Dendritic cell treated with granulocyte-macrophage colony-stimulating factor and Interleukin-4, amounts not matched to agents 40 ng/mL and 50 ng/mL, for 4 days (primary cell): ENCODE measurements at regions of chr14 and their contacts with region 1.

Region 1: GRCh38 chr14:48876806-48877340 is 709.3 kb downstream of the RPS29 start:
- H3K4me3 Mint-ChIP-seq: no peak overlapping the region
- H3K27ac Mint-ChIP-seq: no peak overlapping the region
- H3K4me1 Mint-ChIP-seq: no peaks in the 10 kb centered on the region
- H3K27me3 Mint-ChIP-seq: no peaks in the 10 kb centered on the region

Region 2: DNA sequence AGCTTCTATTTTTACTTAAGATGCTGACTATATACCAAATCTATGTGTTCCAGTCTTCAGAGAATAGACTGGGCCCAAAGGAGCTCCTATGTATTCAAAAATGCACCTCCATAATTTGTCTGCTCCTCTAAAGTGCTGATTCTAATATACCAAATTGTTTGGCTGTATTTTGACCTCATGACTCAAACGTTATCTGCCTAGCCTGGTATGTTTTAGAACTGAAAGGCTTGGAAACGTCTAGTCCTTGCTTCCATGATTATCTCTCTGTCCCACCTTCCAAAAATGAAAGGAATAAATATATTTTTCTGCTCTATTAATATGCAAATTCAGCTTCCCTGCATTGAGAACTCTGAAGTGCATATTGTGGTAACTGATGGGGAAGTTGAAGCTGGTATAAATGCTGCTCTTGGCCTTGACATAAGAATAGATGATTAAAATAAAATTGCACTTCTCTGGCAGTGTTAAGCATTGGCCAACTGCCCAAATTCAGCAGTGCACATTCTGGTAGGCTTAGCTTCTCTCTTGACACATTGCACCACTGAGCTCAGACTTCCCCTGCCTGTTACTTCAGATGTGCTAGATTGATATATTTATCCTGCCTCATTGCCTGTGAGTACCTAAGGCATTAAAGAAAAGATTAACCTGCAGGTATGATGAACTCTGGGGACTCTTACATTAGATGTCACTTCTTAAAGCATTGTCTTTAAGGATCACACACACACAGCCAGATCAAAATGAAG is 173.0 kb before region 1 on chr14:
- intact Hi-C with region 1: no loop called
- H3K4me3 Mint-ChIP-seq: no peak overlapping the region
- H3K27ac Mint-ChIP-seq: no peak overlapping the region
- H3K4me1 Mint-ChIP-seq: no peaks in the 10 kb centered on the region
- H3K27me3 Mint-ChIP-seq: no peaks in the 10 kb centered on the region

Region 3: GRCh38 chr14:48805315-48805714 is 71.6 kb before region 1 on chr14:
- intact Hi-C with region 1: no loop called
- H3K4me3 Mint-ChIP-seq: no peak overlapping the region
- H3K27ac Mint-ChIP-seq: no peak overlapping the region
- H3K4me1 Mint-ChIP-seq: no peaks in the 10 kb centered on the region
- H3K27me3 Mint-ChIP-seq: no peaks in the 10 kb centered on the region

Region 4: GRCh38 chr14:49019467-49020115 is 142.7 kb after region 1 on chr14:
- intact Hi-C with region 1: loop called (anchors 5 kb)
- H3K4me3 Mint-ChIP-seq: no peak overlapping the region
- H3K27ac Mint-ChIP-seq: no peak overlapping the region
- H3K4me1 Mint-ChIP-seq: no peaks in the 10 kb centered on the region
- H3K27me3 Mint-ChIP-seq: no peaks in the 10 kb centered on the region